Activated B cell treated with CpG ODN at 0.5 μM for 24 hours (primary cell): ENCODE measurements at regions of chr20 and their contacts with region 1.

Region 1: DNA sequence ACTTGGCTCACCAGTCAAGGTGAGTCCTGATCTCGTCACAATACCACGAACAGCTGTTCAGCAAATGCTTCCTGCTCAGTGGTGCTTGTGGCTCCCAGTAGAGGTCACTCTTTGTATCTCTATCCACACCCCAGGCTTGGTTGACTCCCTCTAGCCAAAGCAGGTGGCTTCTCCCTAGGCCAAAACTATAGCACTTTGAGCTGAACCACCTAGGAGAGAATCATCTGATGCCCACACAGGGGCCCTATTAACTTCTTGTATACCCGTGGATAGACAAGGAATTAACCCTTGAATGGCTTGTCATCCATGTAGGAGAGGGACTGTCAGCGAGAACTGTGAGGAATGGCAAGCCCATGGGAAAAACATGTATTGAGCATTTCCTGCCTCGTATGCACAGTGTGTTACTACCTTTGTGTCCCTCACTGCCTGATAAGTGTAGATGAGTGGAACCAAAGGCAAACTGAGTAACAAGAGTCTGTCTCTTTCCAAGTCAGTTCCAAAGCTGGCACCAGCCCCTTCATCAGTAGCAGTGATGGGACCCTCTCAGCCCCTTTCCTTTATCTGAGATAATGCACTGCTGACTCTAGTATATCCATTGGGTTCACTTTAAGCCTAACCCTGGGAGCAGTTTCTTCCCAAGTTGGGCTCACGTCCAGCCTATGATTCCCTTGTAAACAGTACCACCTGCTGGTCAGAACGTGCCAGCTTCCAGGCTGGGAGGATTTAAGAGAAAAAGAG is 42.5 kb downstream of the EIF2S2 start:
- DNase-seq: no peak
- ATAC-seq: peak; percentile 89
- H3K4me3 Mint-ChIP-seq: no peak overlapping the region
- H3K27ac Mint-ChIP-seq: peak overlapping the region; percentile 61
- H3K4me1 Mint-ChIP-seq: peaks cover 24% of the 10 kb centered on the region
- H3K27me3 Mint-ChIP-seq: no peaks in the 10 kb centered on the region
- CTCF ChIP-seq: peak; percentile 36

Region 2: DNA sequence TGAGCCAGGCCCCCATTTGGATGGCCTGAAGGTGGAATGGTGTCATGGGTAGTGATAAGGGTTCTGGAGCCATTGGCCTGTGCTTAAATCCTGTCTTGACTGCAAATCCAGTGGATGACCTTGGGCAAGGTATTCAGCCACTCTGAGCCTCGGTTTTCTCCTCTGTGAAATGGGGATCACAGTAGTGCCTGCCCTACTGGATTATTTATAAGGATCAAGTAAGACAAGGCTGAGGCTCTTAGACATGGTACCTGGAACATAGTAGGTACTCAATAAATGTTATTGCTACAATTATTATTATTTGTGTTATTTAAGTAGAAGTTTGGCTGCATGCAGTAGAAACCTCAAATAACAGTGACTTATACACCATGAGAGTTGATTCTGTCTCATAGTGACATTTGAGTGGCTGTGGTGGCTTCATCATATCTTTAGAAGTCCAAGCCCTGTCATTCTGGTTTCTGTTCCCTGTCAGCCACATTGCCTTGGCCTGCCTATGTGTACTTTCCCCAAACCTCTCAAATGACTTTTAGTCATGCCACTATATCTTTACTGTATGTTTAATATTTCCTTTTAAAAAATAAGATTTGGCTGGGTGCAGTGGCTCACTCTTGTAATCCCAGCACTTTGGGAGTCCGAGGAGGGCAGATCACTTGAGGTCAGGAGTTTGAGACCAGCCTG is 296.0 kb before region 1 on chr20:
- CTCF ChIA-PET with region 1: interaction called, 6 read pairs
- POLR2A ChIA-PET with region 1: no interaction called
- intact Hi-C with region 1: loop called (anchors 1 kb)
- DNase-seq: no peak
- ATAC-seq: peak; percentile 65
- H3K4me3 Mint-ChIP-seq: peak overlapping the region; percentile 41
- H3K27ac Mint-ChIP-seq: peak overlapping the region; percentile 93
- H3K4me1 Mint-ChIP-seq: peaks cover 64% of the 10 kb centered on the region
- H3K27me3 Mint-ChIP-seq: no peaks in the 10 kb centered on the region
- CTCF ChIP-seq: no peak

Region 3: GRCh38 chr20:33862709-33863403 is 206.7 kb before region 1 on chr20:
- CTCF ChIA-PET with region 1: interaction called, 21 read pairs
- POLR2A ChIA-PET with region 1: no interaction called
- intact Hi-C with region 1: loop called (anchors 1 kb)
- DNase-seq: peak; percentile 54
- ATAC-seq: peak; percentile 60
- H3K4me3 Mint-ChIP-seq: no peak overlapping the region
- H3K27ac Mint-ChIP-seq: no peak overlapping the region
- H3K4me1 Mint-ChIP-seq: peaks cover 26% of the 10 kb centered on the region
- H3K27me3 Mint-ChIP-seq: no peaks in the 10 kb centered on the region
- CTCF ChIP-seq: no peak

Region 4: GRCh38 chr20:33933469-33933909 is 136.0 kb before region 1 on chr20:
- CTCF ChIA-PET with region 1: interaction called, 5 read pairs
- POLR2A ChIA-PET with region 1: no interaction called
- intact Hi-C with region 1: loop called (anchors 5 kb)
- DNase-seq: no peak
- ATAC-seq: peak; percentile 31
- H3K4me3 Mint-ChIP-seq: no peak overlapping the region
- H3K27ac Mint-ChIP-seq: no peak overlapping the region
- H3K4me1 Mint-ChIP-seq: no peaks in the 10 kb centered on the region
- H3K27me3 Mint-ChIP-seq: no peaks in the 10 kb centered on the region
- CTCF ChIP-seq: no peak